ENCODE measurements at regions of chr7 and their contacts with region 1.

Region 1: DNA sequence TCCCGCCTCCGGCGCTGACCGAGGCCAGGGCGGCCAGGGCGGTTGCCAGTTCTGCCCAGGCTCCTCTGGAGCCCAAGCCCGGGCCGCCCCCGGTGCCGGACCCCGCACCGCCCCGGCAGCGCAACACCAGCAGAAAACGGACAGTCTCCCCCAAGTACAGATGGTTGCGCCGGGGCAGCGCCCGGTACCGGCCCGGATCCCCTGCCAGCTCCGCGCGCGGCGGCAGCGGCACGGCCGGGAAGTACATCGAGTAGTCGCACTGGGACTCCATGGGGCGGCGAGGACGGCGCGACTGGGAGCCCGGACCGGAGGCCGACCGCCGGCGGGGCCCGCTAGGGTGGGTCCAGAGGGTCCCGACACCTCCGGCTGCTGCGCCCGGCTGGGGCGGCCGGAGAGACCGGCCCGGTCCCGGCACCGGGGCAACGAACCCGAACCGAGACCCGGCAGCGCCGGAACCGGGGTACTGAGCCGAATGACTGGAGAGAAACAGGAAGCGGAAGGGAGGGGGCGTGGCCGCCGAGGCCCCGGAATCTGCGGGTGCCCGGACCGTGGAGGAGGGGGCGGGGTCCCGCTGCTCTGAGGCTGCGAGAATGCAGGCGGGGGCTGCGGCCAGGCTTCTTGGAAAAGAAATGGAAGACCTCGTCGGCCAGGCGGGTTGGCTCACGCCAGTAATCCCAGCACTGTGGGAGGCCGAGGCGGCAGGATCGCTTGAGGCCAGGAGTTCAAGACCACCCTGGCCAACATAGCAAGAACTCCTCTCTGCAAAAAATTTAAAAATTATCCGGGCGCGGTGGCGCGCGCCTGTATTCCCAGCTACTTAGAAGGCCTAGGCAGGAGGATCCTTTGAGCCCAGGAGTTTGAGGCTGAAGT is at the start of gene TRAPPC14:
- DNase-seq: peak; percentile 87 to 94 (median 93)
- H3K4me3 ChIP-seq: peak within 1 kb of the TSS; percentile 36 to 92 (median 85)
- H3K27ac ChIP-seq: peak within 1 kb of the TSS; percentile 53 to 90 (median 79)
- H3K4me1 ChIP-seq: peaks cover 3 to 17% of the 10 kb centered on the region in 2 donors
- H3K27me3 ChIP-seq: no peaks in the 10 kb centered on the region
- CTCF ChIP-seq: no peak
- POLR2A ChIP-seq: peak in 1 of 2 donors; percentile 49
- total RNA-seq, gene TRAPPC14: 4.3 to 23.7 (median 16.9) TPM

Region 2: GRCh38 chr7:100034871-100035510 is 123.5 kb before region 1 on chr7:
- intact Hi-C with region 1: no loop called
- DNase-seq: peak in 3 of 7 donors; percentile 46 to 59 (median 52)
- H3K4me3 ChIP-seq: no peak overlapping the region
- H3K27ac ChIP-seq: peak overlapping the region in 4 of 5 donors; percentile 45 to 84 (median 67)
- H3K4me1 ChIP-seq: peaks cover 20 to 32% of the 10 kb centered on the region in 2 donors
- H3K27me3 ChIP-seq: no peaks in the 10 kb centered on the region
- CTCF ChIP-seq: no peak
- POLR2A ChIP-seq: peak in 1 of 2 donors; percentile 44

Region 3: DNA sequence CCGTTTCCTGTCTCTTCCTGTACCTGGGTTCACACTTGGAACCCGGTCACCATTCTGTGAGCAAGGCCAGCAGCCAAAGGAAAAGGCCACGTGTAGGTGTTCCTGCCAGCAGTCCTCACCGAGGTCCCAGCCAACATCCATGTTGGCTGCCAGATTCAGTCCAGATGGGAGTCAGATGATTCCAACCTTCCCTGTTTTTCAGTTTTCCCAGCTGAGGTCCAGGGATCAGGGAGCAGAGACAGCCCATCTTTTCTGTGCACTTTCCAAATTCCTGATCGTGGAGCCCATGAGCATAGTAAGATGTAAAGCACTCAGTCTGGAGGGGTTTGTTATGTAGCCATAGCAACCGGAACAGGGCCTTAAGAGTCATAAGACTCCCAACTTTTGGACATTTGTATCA is 57.4 kb after region 1 on chr7:
- intact Hi-C with region 1: loop called in 1 of 2 experiments (anchors 10 kb)
- DNase-seq: no peak
- H3K4me3 ChIP-seq: no peak overlapping the region
- H3K27ac ChIP-seq: no peak overlapping the region
- H3K4me1 ChIP-seq: peaks cover 0 to 4% of the 10 kb centered on the region in 2 donors
- H3K27me3 ChIP-seq: no peaks in the 10 kb centered on the region
- CTCF ChIP-seq: no peak
- POLR2A ChIP-seq: no peak